OCI-LY7 (cell line): ENCODE measurements at regions of chr1 and their contacts with region 1.

Region 1: DNA sequence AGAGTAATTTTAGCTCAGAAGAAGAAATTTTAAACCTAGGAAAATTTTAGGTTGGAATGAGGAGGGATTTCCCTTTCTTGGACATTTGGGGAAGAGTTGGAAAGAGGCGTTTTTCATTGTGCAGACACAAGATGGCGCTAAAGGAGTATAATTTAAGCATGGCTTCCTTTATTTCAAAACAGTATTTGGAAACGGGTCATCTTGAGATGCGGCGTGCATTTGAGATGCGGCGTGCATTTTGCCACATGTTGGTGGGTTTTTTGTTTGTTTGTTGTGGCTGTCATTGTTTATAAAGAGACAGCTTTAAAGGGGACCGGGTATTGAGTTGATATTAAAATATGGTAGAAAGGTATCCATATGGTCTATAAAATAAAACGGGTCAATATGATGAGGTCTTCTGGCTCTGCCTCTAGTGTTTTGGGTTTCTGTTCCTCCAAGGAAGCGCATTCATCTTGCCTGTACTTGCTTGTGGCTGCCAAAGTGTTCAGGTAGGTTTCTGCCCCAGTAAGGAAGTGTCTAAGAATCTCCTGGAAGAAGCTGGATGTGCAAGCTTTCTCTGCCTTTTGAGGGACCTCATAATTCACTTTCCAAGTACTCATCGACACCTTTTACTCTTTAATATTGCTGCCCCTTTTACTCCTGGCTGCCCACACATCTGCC is 210.3 kb downstream of the SLC35F3 start:
- DNase-seq: peak; percentile 55
- H3K4me3 ChIP-seq: no peak overlapping the region
- H3K27ac ChIP-seq: no peak overlapping the region
- H3K4me1 ChIP-seq: no peaks in the 10 kb centered on the region
- CTCF ChIP-seq: peak; percentile 93

Region 2: GRCh38 chr1:234093741-234094140 is 21.0 kb before region 1 on chr1:
- CTCF ChIA-PET with region 1: no interaction called
- POLR2A ChIA-PET with region 1: no interaction called
- intact Hi-C with region 1: no loop called
- DNase-seq: no peak
- H3K4me3 ChIP-seq: no peak overlapping the region
- H3K27ac ChIP-seq: no peak overlapping the region
- H3K4me1 ChIP-seq: no peaks in the 10 kb centered on the region
- CTCF ChIP-seq: no peak

Region 3: GRCh38 chr1:234188454-234188792 is 73.6 kb after region 1 on chr1:
- CTCF ChIA-PET with region 1: no interaction called
- POLR2A ChIA-PET with region 1: no interaction called
- intact Hi-C with region 1: loop called (anchors 2 kb)
- DNase-seq: peak; percentile 17
- H3K4me3 ChIP-seq: no peak overlapping the region
- H3K27ac ChIP-seq: no peak overlapping the region
- H3K4me1 ChIP-seq: no peaks in the 10 kb centered on the region
- CTCF ChIP-seq: peak; percentile 75

Region 4: GRCh38 chr1:234309598-234310459 is 195.1 kb after region 1 on chr1:
- CTCF ChIA-PET with region 1: no interaction called
- POLR2A ChIA-PET with region 1: no interaction called
- intact Hi-C with region 1: loop called (anchors 1 kb)
- DNase-seq: peak; percentile 70
- H3K4me3 ChIP-seq: no peak overlapping the region
- H3K27ac ChIP-seq: no peak overlapping the region
- H3K4me1 ChIP-seq: no peaks in the 10 kb centered on the region
- CTCF ChIP-seq: peak; percentile 97